ENCODE measurements at regions of chr12 and their contacts with region 1.

Region 1: DNA sequence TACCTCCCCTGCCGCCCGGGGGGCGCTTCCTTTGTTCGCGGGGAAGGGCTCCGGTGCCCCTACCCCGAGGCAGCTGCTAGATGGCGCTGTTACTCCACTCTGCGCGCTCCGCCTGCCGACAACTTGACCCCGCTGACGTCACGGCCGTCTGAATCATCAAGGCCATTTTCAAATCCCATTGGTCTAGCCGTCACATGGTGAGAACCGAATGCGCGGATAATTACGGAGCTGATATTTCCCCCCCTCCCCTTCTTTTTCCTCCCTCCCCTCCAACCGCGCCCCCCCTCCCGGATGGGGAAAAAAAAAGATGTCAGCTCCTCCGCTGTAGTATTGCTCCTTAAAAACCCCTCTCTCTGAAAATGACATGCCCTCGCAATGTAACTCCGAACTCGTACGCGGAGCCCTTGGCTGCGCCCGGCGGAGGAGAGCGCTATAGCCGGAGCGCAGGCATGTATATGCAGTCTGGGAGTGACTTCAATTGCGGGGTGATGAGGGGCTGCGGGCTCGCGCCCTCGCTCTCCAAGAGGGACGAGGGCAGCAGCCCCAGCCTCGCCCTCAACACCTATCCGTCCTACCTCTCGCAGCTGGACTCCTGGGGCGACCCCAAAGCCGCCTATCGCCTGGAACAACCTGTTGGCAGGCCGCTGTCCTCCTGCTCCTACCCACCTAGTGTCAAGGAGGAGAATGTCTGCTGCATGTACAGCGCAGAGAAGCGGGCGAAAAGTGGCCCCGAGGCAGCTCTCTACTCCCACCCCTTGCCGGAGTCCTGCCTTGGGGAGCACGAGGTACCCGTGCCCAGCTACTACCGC is at the start of gene HOXC10:
- DNase-seq: peak; percentile 97
- H3K4me3 ChIP-seq: peak within 1 kb of the TSS; percentile 41 to 52; a peak in 3 of 4 replicates
- H3K27ac ChIP-seq: no peak within 1 kb of the TSS
- H3K4me1 ChIP-seq: peaks cover 0 to 12% of the 10 kb centered on the region in 2 experiments; a peak in 1 of 4 replicates
- H3K27me3 ChIP-seq: peaks cover 95% of the 10 kb centered on the region
- CTCF ChIP-seq: peak; percentile 80
- EP300 ChIP-seq: no peak
- RAD21 ChIP-seq: peak; percentile 88
- polyA plus RNA-seq, gene HOXC10: 0.03 and 0.08 TPM in 2 replicates

Region 2: DNA sequence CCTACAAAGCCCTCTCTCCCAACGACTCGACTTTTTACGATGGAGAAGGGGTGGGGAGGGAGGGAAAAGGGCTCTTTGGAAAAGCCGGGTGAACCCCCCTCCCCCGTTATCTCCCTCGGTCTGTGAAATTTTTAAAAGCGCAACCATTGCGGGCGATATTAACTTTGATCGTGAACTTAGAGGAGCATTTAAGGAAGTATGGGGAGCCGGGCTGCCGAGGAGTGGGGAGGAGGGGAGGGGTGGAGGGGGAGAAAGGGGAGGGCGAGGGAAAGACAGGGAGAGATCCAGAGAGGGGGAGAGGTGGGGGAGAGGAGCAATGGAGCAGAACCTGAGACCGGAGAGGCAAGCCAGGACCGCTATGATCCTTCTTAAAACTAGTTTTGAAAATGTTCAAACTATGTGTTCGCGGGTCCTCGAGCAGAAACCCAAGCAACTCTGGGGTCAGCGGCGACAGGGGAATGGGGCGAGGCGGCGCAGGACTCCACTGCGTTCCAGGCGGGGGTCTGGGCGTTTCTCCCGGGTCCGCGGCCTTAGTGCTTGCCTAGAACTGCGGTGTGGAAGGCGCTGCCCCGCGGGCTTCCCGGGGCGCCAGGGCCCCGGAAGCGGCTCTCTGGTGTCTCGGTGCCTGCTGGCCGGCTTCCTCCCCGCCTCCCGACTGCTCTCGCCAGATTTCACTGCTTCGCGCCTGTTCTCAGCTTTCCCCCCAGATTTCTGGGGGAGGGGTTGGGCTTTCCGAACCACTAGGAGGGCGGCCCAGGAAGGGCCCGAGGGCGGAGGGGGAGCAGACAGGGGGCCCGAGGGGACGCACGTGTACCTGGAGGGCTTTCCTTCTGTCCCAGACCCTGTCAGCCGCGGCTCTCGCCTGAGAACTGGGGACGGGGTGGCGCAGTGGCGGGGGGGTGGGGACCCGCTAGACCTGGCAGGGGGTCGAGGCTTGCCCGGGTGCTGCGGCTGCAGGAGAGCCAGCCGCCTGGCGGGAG is 10.7 kb before region 1 on chr12 and contains the start of gene HOTAIR:
- CTCF ChIA-PET with region 1: interaction called, 134 read pairs
- POLR2A ChIA-PET with region 1: no interaction called
- DNase-seq: peak; percentile 63
- H3K4me3 ChIP-seq: no peak within 1 kb of the TSS; a peak in 1 of 4 replicates
- H3K27ac ChIP-seq: no peak within 1 kb of the TSS
- H3K4me1 ChIP-seq: peaks cover 0 to 2% of the 10 kb centered on the region in 2 experiments; a peak in 2 of 4 replicates
- H3K27me3 ChIP-seq: peaks cover 98% of the 10 kb centered on the region
- CTCF ChIP-seq: no peak
- EP300 ChIP-seq: no peak
- RAD21 ChIP-seq: no peak
- polyA plus RNA-seq, gene HOTAIR: not detected in 2 replicates

Region 3: GRCh38 chr12:54005853-54006686 is 21.0 kb after region 1 on chr12:
- CTCF ChIA-PET with region 1: interaction called, 188 read pairs
- POLR2A ChIA-PET with region 1: interaction called, 5 read pairs
- DNase-seq: peak; percentile 93
- H3K4me3 ChIP-seq: no peak overlapping the region
- H3K27ac ChIP-seq: no peak overlapping the region
- H3K4me1 ChIP-seq: peaks cover 0 to 23% of the 10 kb centered on the region in 2 experiments; a peak in 1 of 4 replicates
- H3K27me3 ChIP-seq: no peaks in the 10 kb centered on the region
- CTCF ChIP-seq: peak; percentile 89
- EP300 ChIP-seq: no peak
- RAD21 ChIP-seq: peak; percentile 94

Region 4: DNA sequence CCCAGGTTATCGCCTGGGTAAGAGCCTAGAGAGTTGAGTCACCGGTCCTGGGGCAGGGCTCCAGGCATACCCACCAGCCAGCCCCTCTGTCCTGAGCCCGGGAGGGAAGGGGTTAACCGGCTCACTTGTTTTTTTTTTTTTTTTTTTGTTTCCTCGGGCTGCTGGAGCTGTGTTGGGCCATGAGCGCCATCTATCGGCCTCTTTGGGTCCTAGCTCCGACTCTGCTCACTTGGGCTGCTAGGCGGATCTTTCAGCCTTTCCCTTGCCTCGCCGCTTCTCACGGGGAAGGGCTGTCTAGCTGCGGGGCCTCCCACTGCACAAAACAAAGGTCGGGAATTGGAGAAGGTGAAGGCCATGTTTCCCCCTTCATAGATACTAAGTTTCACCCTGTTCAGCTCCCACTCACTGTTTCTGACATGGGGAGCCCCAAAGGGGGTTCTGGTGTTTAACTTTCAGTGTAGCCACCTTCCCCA is 206.5 kb after region 1 on chr12:
- CTCF ChIA-PET with region 1: interaction called, 50 read pairs
- POLR2A ChIA-PET with region 1: no interaction called
- DNase-seq: peak; percentile 83
- H3K4me3 ChIP-seq: peak overlapping the region in 1 of 2 experiments; percentile 46; a peak in 1 of 4 replicates
- H3K27ac ChIP-seq: no peak overlapping the region
- H3K4me1 ChIP-seq: peaks cover 17 to 50% of the 10 kb centered on the region in 2 experiments; a peak in 3 of 4 replicates
- H3K27me3 ChIP-seq: no peaks in the 10 kb centered on the region
- CTCF ChIP-seq: peak; percentile 82
- EP300 ChIP-seq: no peak
- RAD21 ChIP-seq: peak; percentile 94

Region 5: DNA sequence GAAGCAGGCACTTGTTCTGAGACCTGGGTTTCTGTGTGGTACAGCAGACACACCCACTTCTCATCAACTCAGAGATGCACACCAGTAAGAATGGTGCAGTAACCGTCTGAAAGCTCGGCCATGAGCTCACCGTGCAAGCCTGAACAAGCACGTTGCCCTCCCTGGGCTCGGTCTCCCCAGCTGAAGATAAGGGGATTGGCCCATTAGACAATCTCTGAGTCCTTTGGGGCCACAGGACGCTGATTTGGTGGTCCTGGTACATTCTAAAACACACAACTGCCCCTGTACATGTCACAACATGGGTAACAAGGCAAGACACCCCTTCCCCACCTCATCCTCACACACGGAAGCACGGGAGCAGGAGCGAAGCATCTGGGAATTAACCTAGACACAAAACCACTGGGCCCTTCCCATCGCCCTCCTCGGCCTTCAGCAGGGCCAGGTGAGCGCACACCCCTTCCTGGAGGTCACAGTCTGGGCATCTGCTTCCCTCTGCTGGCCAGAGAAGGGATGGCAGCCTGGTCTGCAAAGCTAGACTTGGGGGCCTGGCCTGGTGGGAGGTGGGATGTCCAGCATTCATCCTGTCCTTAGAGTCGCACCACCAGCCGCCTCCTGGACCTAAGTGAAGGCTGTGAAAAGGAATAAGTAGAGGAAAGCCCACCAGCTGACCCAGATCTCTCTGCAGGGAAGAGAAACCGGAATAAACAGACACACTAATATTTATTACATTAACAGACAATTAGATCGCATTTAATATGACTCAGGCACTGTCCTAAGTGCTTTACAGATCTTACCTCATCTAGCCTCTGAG is 222.6 kb after region 1 on chr12:
- CTCF ChIA-PET with region 1: interaction called, 194 read pairs
- POLR2A ChIA-PET with region 1: no interaction called
- DNase-seq: peak; percentile 81
- H3K4me3 ChIP-seq: no peak overlapping the region
- H3K27ac ChIP-seq: no peak overlapping the region; a peak in 1 of 4 replicates
- H3K4me1 ChIP-seq: peaks cover 0 to 15% of the 10 kb centered on the region in 2 experiments; a peak in 1 of 4 replicates
- H3K27me3 ChIP-seq: peaks cover 16% of the 10 kb centered on the region; the same call in 1 of the 2 replicates
- CTCF ChIP-seq: peak; percentile 90
- EP300 ChIP-seq: no peak
- RAD21 ChIP-seq: peak; percentile 86

Measured in SK-N-SH (cell line).